GM12878 (cell line): ENCODE measurements at regions of chr3 and their contacts with region 1.

Region 1: GRCh38 chr3:39288300-39288808 is 8.5 kb upstream of the CX3CR1 start:
- DNase-seq: peak; percentile 95
- ATAC-seq: peak; percentile 97
- H3K4me3 ChIP-seq: no peak overlapping the region
- H3K27ac ChIP-seq: no peak overlapping the region
- H3K4me1 ChIP-seq: peaks cover 17% of the 10 kb centered on the region
- H3K27me3 ChIP-seq: no peaks in the 10 kb centered on the region
- CTCF ChIP-seq: peak; percentile 93 to 99 (median 99); a peak in 5 of 6 replicates
- EP300 ChIP-seq: peak in 1 of 2 experiments; percentile 65; a peak in 2 of 4 replicates
- POLR2A ChIP-seq: no peak
- RAD21 ChIP-seq: peak; percentile 99

Region 2: GRCh38 chr3:39079530-39079929 is 208.8 kb before region 1 on chr3:
- CTCF ChIA-PET with region 1: interaction called, 11 read pairs
- POLR2A ChIA-PET with region 1: no interaction called
- RAD21 ChIA-PET with region 1: interaction called, 3 read pairs
- SMC1A ChIA-PET with region 1: interaction called, 3 read pairs
- in situ Hi-C with region 1: no loop called
- intact Hi-C with region 1: no loop called
- DNase-seq: no peak
- ATAC-seq: no peak
- H3K4me3 ChIP-seq: no peak overlapping the region
- H3K27ac ChIP-seq: no peak overlapping the region
- H3K4me1 ChIP-seq: no peaks in the 10 kb centered on the region
- H3K27me3 ChIP-seq: no peaks in the 10 kb centered on the region
- CTCF ChIP-seq: no peak; a peak in 1 of 6 replicates
- EP300 ChIP-seq: no peak
- POLR2A ChIP-seq: no peak
- RAD21 ChIP-seq: no peak

Region 3: GRCh38 chr3:39146984-39147591 is 141.3 kb before region 1 on chr3:
- CTCF ChIA-PET with region 1: interaction called, 6 read pairs
- POLR2A ChIA-PET with region 1: interaction called, 4 read pairs
- RAD21 ChIA-PET with region 1: interaction called, 14 read pairs
- SMC1A ChIA-PET with region 1: interaction called, 15 read pairs
- in situ Hi-C with region 1: no loop called
- intact Hi-C with region 1: loop called (anchors 1 kb)
- DNase-seq: no peak
- ATAC-seq: peak; percentile 38
- H3K4me3 ChIP-seq: peak overlapping the region; percentile 85
- H3K27ac ChIP-seq: peak overlapping the region; percentile 99
- H3K4me1 ChIP-seq: peaks cover 45% of the 10 kb centered on the region
- H3K27me3 ChIP-seq: no peaks in the 10 kb centered on the region
- CTCF ChIP-seq: no peak
- EP300 ChIP-seq: no peak
- POLR2A ChIP-seq: peak; percentile 57
- RAD21 ChIP-seq: no peak

Region 4: GRCh38 chr3:39208463-39209055 is 79.8 kb before region 1 on chr3:
- CTCF ChIA-PET with region 1: interaction called, 389 read pairs
- POLR2A ChIA-PET with region 1: interaction called, 3 read pairs
- RAD21 ChIA-PET with region 1: interaction called, 40 read pairs
- SMC1A ChIA-PET with region 1: interaction called, 648 read pairs
- in situ Hi-C with region 1: no loop called
- intact Hi-C with region 1: loop called (anchors 1 kb)
- DNase-seq: no peak
- ATAC-seq: peak; percentile 86
- H3K4me3 ChIP-seq: no peak overlapping the region
- H3K27ac ChIP-seq: no peak overlapping the region
- H3K4me1 ChIP-seq: peaks cover 8% of the 10 kb centered on the region; the same call in 1 of the 2 replicates
- H3K27me3 ChIP-seq: no peaks in the 10 kb centered on the region
- CTCF ChIP-seq: peak; percentile 65 to 77 (median 74)
- EP300 ChIP-seq: no peak
- POLR2A ChIP-seq: no peak
- RAD21 ChIP-seq: peak; percentile 70

Region 5: DNA sequence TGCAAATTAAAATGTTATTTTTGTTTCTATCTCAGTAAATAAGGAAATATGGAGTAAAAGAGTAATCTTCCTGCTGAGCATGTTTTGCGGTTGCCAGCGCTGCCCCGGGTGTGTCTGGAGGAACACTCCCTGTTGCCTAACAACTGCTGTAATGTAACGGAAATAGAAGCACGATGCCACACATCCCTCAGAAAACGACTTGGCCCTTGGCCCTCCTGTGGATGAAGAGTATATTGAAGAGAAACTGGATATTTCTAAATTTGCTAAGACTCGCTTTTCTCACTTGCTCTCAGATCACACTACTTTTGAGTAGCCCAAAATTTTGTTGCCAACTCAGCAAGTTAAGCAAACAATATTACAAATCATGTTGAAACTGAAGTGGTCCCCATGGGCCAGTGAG is 27.4 kb before region 1 on chr3:
- CTCF ChIA-PET with region 1: interaction called, 49 read pairs
- POLR2A ChIA-PET with region 1: interaction called, 4 read pairs
- RAD21 ChIA-PET with region 1: interaction called, 8 read pairs
- SMC1A ChIA-PET with region 1: interaction called, 25 read pairs
- in situ Hi-C with region 1: no loop called
- intact Hi-C with region 1: no loop called
- DNase-seq: peak; percentile 27
- ATAC-seq: peak; percentile 84
- H3K4me3 ChIP-seq: no peak overlapping the region
- H3K27ac ChIP-seq: no peak overlapping the region
- H3K4me1 ChIP-seq: peaks cover 16% of the 10 kb centered on the region
- H3K27me3 ChIP-seq: peaks cover 0 to 6% of the 10 kb centered on the region in 2 experiments; a peak in 2 of 4 replicates
- CTCF ChIP-seq: peak in 2 of 3 experiments; percentile 29 to 38; a peak in 2 of 6 replicates
- EP300 ChIP-seq: no peak
- POLR2A ChIP-seq: no peak
- RAD21 ChIP-seq: peak; percentile 35

Region 6: DNA sequence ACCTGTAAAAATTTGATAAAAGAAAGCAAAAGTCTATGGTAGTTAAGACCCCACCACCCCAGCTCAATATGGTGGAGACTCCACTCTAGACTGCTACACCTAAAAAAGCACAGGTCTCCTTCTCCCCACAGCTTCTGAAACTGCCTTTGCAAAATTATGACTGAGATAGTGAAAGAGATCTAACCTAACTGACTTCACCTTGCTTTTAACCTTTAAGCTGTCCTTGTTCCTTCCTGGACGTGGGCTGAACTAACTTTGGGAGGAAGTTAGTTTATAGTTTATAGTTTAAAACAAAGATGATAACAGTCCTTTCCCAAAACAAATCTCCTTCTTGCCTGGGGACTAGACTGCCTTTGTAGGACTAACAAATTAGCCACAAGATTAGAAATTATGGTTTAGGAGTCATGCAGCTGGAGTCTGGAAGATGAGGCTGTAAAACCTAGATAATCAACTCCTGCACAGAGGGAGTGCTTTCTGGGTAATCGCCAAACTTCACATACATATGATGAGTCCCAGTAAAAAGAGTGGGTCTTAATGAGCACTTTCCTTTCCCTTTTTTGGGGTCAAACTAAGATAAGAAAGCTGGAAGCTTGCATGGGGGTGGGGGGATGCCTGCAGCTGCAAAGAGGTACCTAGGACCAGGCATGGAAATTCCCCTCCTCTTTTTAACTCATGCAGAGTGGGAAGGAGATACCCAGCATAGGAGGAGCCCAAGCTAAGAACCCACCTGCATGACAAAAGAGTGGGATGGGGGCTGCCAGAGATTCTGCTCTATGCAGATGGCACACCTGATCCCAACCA is 58.6 kb after region 1 on chr3:
- CTCF ChIA-PET with region 1: interaction called, 37 read pairs
- POLR2A ChIA-PET with region 1: interaction called, 3 read pairs
- RAD21 ChIA-PET with region 1: interaction called, 24 read pairs
- SMC1A ChIA-PET with region 1: interaction called, 33 read pairs
- in situ Hi-C with region 1: no loop called
- intact Hi-C with region 1: no loop called
- DNase-seq: no peak
- ATAC-seq: peak; percentile 91
- H3K4me3 ChIP-seq: peak overlapping the region; percentile 0; the same call in 1 of the 2 replicates
- H3K27ac ChIP-seq: peak overlapping the region; percentile 61
- H3K4me1 ChIP-seq: peaks cover 17% of the 10 kb centered on the region
- H3K27me3 ChIP-seq: no peaks in the 10 kb centered on the region
- CTCF ChIP-seq: no peak
- EP300 ChIP-seq: no peak
- POLR2A ChIP-seq: no peak
- RAD21 ChIP-seq: no peak

Region 7: DNA sequence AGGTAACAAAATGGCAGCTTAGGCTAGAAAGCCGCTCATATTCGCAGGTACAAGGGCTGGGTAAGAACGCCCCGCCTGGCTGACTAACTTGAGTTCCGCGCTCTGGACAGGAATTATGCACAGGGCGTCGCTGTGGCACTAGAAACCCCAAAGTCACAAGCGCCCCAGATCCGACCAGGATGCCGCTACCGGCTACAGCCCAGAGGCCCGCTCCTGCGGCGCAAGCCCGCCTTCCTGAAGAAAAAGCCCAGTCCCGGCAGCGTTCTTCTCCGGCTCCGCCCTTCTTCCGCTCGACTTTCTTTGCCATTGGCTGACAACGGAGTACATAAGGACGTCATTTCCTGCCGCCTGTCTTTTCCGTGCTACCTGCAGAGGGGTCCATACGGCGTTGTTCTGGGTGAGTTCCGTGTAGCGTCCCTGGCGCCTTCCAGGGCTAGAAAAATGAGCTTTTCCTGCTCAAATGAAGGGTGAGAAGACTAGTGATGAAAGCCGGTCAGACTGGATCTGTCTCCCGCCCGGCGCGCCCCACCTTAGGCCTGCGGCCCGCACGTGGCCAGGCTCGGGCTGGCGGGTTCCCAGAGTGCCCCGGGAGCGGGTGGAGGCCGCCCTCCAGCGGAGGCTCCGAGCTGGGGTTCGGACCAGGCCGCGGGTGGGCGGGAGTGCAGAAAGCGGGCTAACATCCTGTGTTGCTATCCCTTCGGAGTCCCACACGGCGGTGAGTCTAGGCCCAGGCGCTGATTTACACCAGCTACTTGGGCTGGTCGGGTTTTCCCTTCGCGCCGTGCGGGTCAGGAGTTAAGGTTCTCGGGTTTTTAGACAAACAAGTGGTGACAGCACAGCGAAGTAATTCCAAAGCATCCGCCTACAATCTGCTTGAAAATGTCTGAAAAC is 118.3 kb after region 1 on chr3 and contains the start of gene RPSA:
- CTCF ChIA-PET with region 1: interaction called, 16 read pairs
- POLR2A ChIA-PET with region 1: interaction called, 5 read pairs
- RAD21 ChIA-PET with region 1: interaction called, 18 read pairs
- SMC1A ChIA-PET with region 1: interaction called, 22 read pairs
- in situ Hi-C with region 1: no loop called
- intact Hi-C with region 1: no loop called
- DNase-seq: peak; percentile 93
- ATAC-seq: peak; percentile 91
- H3K4me3 ChIP-seq: peak within 1 kb of the TSS; percentile 94
- H3K27ac ChIP-seq: peak within 1 kb of the TSS; percentile 83
- H3K4me1 ChIP-seq: no peaks in the 10 kb centered on the region
- H3K27me3 ChIP-seq: no peaks in the 10 kb centered on the region
- CTCF ChIP-seq: peak; percentile 42 to 55 (median 42); a peak in 5 of 6 replicates
- EP300 ChIP-seq: 0 out of 4 replicates have a peak, but pooled peaks of 1 of the 2 experiments have one; percentile 24
- POLR2A ChIP-seq: peak; percentile 100
- RAD21 ChIP-seq: peak; percentile 51
- polyA plus RNA-seq, gene RPSA: 2,843 to 4,532 TPM

Region 8: GRCh38 chr3:39762537-39763070 is 474.2 kb after region 1 on chr3:
- CTCF ChIA-PET with region 1: no interaction called
- POLR2A ChIA-PET with region 1: no interaction called
- RAD21 ChIA-PET with region 1: no interaction called
- SMC1A ChIA-PET with region 1: no interaction called
- in situ Hi-C with region 1: no loop called
- intact Hi-C with region 1: no loop called
- DNase-seq: no peak
- ATAC-seq: no peak
- H3K4me3 ChIP-seq: no peak overlapping the region
- H3K27ac ChIP-seq: no peak overlapping the region
- H3K4me1 ChIP-seq: no peaks in the 10 kb centered on the region
- H3K27me3 ChIP-seq: no peaks in the 10 kb centered on the region
- CTCF ChIP-seq: no peak
- EP300 ChIP-seq: no peak
- POLR2A ChIP-seq: no peak
- RAD21 ChIP-seq: no peak